Activated CD8-positive, alpha-beta T cell treated with anti-CD3 and anti-CD28 coated beads, Interleukin-2, amount 10 ng/mL, durations not matched to agents 7 days and 5 days (primary cell): ENCODE measurements at regions of chr17 and their contacts with region 1.

Region 1: DNA sequence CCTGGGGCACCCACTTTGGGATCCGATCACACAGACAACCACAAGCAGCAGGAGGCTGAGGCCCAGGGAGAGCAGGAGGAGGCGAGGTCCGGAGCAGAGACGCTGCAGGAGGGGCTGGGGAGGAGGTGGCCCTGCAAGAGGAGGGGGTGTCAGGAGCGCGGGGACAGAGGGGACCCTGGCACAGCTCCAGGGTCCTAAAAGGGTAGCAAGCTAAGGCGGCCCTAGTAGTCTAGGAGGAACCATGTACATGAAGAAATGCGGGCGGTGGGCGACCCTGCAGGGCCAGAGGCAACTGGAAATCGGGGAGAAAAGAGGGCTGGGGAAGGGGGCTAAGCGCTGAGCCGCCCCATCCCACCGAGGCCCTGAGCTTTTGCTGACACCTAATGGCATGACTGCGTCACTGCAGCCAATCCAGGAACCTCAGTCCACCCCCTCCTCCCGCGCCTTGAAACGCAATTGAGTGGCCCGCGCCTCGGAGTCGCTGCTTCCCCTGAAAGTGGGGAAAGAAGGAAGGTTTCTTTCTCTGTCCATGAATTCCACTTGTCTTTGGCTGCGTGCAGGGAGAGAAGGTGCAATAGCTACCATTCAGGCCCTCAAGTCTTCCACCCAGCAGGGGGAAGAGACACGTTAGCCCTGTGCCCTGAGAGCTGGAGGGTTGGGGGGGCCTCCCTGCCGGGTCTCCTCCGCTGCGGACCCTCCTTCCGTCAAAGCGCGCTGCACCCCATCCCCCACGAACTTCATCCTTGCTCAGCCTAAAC is 1.8 kb downstream of the ASGR1 start:
- DNase-seq: peak; percentile 72
- ATAC-seq: peak; percentile 70
- H3K4me3 Mint-ChIP-seq: peak overlapping the region; percentile 48
- H3K27ac Mint-ChIP-seq: no peak overlapping the region
- H3K4me1 Mint-ChIP-seq: peaks cover 12% of the 10 kb centered on the region
- H3K27me3 Mint-ChIP-seq: peaks cover 14% of the 10 kb centered on the region

Region 2: GRCh38 chr17:7021993-7022778 is 155.2 kb before region 1 on chr17:
- CTCF ChIA-PET with region 1: no interaction called
- POLR2A ChIA-PET with region 1: no interaction called
- DNase-seq: peak; percentile 86
- ATAC-seq: peak; percentile 74
- H3K4me3 Mint-ChIP-seq: peak overlapping the region; percentile 8
- H3K27ac Mint-ChIP-seq: peak overlapping the region; percentile 55
- H3K4me1 Mint-ChIP-seq: peaks cover 73% of the 10 kb centered on the region
- H3K27me3 Mint-ChIP-seq: peaks cover 2% of the 10 kb centered on the region

Region 3: DNA sequence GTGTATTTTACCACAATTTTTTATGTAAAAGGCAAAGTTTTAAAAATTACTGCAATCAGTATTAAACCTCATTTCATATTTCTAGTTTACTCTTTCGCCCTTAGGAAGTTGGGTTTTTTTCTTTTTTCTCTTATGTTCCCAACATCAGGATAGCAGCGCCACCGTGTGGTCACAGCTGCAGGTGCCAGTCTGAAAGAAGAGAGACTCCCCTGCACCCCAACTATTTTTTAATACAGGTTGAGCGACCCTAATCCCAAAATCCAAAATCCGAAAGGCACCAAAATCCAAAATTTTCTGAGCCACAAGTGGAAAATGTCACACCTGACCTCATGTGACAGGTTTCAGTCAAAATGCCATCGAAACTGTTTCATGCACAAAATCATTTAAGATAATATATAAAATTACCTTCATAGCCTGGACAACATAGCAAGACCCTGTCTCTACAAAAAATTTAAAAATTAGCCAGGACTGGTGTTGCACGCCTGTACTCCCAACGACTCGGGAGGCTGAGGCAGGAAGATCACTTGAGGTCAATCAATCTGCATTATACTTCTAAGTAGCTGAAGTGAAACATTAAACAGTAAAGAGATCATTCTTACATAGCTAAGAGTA is 41.0 kb before region 1 on chr17:
- CTCF ChIA-PET with region 1: interaction called, 30 read pairs
- POLR2A ChIA-PET with region 1: no interaction called
- DNase-seq: peak; percentile 84
- ATAC-seq: no peak
- H3K4me3 Mint-ChIP-seq: no peak overlapping the region
- H3K27ac Mint-ChIP-seq: no peak overlapping the region
- H3K4me1 Mint-ChIP-seq: peaks cover 10% of the 10 kb centered on the region
- H3K27me3 Mint-ChIP-seq: peaks cover 4% of the 10 kb centered on the region

Region 4: DNA sequence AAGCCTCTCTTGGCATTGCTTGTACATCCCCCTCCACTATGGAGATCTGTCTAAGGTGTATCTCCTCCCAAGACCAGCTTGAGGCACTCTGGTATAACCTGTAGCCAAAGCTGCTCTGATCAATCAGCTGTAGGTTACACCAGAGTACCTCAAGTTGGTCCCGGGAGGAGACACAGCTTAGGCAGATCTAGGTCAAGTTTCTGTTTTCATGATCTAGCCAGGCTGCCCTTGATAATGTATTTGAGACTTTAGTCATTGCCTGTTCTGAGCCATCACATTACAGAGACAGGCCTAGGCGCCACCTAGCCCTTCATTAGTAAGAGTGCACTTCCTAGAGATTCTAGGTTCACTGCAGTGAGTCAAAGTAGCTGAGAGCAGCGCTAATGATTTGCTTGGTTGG is 29.6 kb before region 1 on chr17:
- CTCF ChIA-PET with region 1: interaction called, 12 read pairs
- POLR2A ChIA-PET with region 1: no interaction called
- DNase-seq: no peak
- ATAC-seq: no peak
- H3K4me3 Mint-ChIP-seq: no peak overlapping the region
- H3K27ac Mint-ChIP-seq: no peak overlapping the region
- H3K4me1 Mint-ChIP-seq: no peaks in the 10 kb centered on the region
- H3K27me3 Mint-ChIP-seq: peaks cover 4% of the 10 kb centered on the region

Region 5: DNA sequence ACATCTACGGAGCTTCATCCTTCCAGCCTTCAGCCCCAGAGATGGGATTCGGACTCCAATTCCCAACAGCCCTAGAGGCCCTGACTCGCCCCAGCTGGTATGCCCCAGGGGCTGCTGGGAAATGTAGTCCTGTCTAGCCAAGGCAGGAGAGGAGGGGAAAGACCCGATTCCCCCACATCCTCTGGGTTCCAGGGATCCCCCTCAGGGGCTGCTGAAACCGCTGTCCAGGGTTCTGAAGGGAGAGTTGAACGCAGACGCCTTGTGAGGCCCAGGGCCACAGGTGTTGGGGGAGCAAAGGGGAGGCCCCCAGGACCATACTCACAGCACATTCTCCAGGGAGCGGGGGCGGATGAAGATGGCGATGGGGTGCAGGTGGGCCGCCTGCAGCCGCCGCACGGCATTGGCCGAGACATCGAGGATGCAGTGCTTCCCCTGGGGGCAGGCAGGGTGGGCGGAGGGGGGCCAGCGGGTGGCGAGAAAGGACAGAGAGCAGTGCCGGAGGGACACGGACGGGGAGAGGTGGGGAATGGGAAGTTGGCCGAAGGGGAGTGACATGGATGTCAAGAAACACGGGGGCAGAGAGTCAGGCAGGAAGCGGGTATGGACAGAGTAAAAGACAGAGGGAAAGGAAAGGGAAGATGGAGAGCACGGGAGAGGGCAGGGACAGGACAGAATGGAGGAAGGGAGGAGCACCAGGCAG is 14.3 kb after region 1 on chr17:
- CTCF ChIA-PET with region 1: interaction called, 13 read pairs
- POLR2A ChIA-PET with region 1: no interaction called
- DNase-seq: peak; percentile 49
- ATAC-seq: peak; percentile 28
- H3K4me3 Mint-ChIP-seq: no peak overlapping the region
- H3K27ac Mint-ChIP-seq: no peak overlapping the region
- H3K4me1 Mint-ChIP-seq: no peaks in the 10 kb centered on the region
- H3K27me3 Mint-ChIP-seq: no peaks in the 10 kb centered on the region

Region 6: DNA sequence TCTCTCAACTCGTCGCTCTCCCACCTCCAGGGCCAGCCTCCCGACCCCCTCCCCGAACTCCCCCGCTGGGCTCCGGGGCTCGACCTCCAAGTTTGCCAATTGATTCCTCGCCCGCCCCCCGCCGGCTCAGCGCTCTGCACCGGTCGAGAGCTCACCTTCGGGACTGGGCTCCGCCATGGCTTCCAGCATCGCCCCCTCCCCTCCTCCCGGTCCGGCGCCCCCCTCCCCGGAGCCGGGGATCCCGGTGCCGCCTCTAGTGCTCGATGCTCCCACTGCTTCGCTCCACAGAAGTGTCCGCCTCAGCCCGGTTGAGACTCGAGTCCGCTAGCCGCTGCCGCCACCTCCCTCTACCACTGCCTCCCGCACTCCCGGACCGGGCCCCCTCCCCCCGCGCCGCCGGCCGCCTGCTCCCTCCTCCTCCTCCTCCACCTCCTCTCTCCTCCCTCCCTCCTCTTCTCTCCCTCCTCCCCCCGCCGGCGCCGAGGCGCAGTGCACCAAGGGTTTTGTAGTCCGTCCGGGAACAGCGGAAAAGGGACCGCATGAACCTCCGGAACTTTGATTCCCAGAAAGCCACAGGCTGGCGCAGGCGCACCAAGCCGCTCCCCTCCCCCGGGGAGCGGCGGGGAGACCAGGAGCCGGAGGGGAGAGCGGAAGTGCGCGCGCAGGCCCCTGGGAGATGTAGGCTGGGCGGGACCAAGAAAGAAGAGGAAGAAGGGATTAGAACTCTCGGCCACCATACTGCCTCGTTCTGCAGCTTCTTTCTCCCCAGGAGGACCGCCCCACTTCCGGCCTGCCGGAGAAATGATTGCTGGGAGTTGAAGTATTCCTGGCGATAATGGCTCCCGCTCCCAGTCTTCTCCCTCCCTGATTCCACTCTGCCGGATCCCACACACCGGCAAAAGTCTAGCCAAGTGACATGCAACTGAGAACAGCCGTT is 62.0 kb after region 1 on chr17 and contains the start of gene PHF23:
- CTCF ChIA-PET with region 1: no interaction called
- POLR2A ChIA-PET with region 1: no interaction called
- DNase-seq: peak; percentile 98
- ATAC-seq: peak; percentile 67
- H3K4me3 Mint-ChIP-seq: peak within 1 kb of the TSS; percentile 98
- H3K27ac Mint-ChIP-seq: peak within 1 kb of the TSS; percentile 91
- H3K4me1 Mint-ChIP-seq: peaks cover 66% of the 10 kb centered on the region
- H3K27me3 Mint-ChIP-seq: no peaks in the 10 kb centered on the region
- total RNA-seq, gene PHF23: 53.6 to 57.9 TPM